Endothelial cell of umbilical vein (primary cell): ENCODE measurements at regions of chr17 and their contacts with region 1.

Region 1: DNA sequence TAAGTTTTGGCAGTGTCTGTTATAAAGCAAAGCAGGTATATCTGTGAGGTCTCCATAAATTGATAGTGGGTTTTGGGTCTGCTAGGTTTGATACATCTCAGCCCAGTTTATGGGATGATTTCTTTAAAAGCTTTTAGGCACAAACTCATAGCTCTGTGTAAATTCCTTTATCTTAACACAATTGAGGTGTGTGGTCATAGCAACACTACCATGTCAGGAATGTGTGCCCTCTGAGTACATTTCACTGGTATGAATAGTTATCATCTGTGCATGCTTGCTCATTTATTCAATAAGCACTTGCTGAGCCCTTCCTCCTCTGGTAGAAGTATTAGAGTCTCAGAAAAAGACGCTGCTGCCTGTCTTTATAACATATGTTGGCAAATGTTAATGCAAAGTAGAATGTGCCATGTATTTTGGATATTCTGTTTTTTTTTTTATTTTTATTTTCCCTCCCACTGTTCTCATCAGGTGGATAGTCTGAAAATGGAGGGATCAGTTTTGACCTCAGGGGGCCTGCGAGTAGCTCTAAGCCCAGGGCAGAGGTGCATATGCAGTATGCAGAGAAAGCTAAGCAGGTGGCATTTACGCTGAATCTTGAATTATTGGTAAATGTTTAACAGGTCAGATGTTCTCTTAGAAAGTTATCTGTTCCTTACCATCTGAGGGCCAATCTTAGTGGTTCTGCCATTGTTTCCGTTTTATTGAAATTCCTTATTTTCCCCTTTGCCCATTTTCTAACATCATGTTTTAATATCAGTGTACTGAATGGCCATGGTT is 90.7 kb downstream of the WNT3 start:
- DNase-seq: no peak
- H3K4me3 ChIP-seq: no peak overlapping the region
- H3K27ac ChIP-seq: no peak overlapping the region
- H3K4me1 ChIP-seq: no peaks in the 10 kb centered on the region
- H3K27me3 ChIP-seq: no peaks in the 10 kb centered on the region
- CTCF ChIP-seq: no peak
- POLR2A ChIP-seq: no peak

Region 2: GRCh38 chr17:46764709-46765401 is 37.1 kb after region 1 on chr17:
- CTCF ChIA-PET with region 1: interaction called, 4 read pairs
- POLR2A ChIA-PET with region 1: no interaction called
- dilution Hi-C with region 1: no loop called
- intact Hi-C with region 1: loop called (anchors 5 kb)
- DNase-seq: peak; percentile 91
- H3K4me3 ChIP-seq: no peak overlapping the region
- H3K27ac ChIP-seq: peak overlapping the region; percentile 10
- H3K4me1 ChIP-seq: peaks cover 20% of the 10 kb centered on the region
- H3K27me3 ChIP-seq: no peaks in the 10 kb centered on the region
- CTCF ChIP-seq: no peak
- POLR2A ChIP-seq: no peak

Region 3: DNA sequence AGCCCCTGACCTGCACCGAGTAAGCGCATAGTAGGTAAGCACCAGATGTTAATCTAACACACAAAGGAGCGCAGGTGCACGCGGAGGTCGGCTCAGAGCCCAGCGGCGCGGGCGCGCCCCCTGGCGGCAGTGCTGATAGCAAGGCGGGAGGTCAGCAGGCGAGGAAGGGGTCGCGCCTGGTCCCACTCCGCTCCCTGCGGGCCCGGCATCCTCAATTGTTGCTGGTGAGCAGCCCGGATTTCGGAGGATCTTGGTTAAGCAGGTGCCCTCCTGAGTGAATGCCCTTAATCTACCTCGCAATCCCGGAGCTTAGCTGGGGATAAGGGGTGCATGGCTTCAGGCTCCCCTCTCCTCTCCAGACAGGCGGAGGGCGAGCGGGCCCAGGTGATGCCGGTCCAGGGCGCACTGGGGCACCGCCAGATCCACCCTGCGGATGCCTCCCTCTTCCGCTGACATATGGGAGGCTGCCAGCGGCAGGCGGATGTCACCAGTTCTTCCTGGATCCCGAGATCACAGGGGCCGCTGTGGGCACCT is 94.7 kb after region 1 on chr17:
- CTCF ChIA-PET with region 1: no interaction called
- POLR2A ChIA-PET with region 1: no interaction called
- dilution Hi-C with region 1: no loop called
- intact Hi-C with region 1: loop called (anchors 10 kb)
- DNase-seq: no peak
- H3K4me3 ChIP-seq: no peak overlapping the region
- H3K27ac ChIP-seq: no peak overlapping the region
- H3K4me1 ChIP-seq: no peaks in the 10 kb centered on the region
- H3K27me3 ChIP-seq: peaks cover 46 to 54% of the 10 kb centered on the region in 2 experiments
- CTCF ChIP-seq: peak; percentile 65 to 72
- POLR2A ChIP-seq: no peak